Calu3 (cell line): ENCODE measurements at regions of chr7 and their contacts with region 1.

Region 1: GRCh38 chr7:116929914-116930913 is 23.1 kb upstream of the ST7 start:
- DNase-seq: peak; percentile 73
- H3K4me3 Mint-ChIP-seq: peak overlapping the region; percentile 1
- H3K27ac Mint-ChIP-seq: no peak overlapping the region
- H3K4me1 Mint-ChIP-seq: peaks cover 9% of the 10 kb centered on the region
- H3K27me3 Mint-ChIP-seq: no peaks in the 10 kb centered on the region
- CTCF ChIP-seq: peak; percentile 82

Region 2: DNA sequence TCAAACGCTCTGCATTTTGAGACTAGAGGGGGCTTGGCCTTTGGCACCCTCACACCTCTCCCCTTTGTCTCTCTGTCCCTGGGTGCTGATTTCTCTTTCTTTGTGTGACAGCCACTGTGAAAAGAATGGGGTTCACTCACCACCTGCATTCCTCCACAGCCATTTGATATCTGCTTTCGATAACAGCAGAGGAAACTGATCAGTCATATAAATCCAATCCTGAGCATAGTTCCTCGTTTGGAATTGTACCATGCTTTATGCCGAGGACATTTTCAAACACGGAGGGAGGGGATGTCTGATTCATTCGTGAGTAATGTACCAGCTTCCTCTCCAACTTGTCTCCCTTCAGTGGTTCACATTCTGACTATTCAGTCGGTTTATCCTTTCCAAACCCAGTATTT is 242.4 kb before region 1 on chr7:
- CTCF ChIA-PET with region 1: no interaction called
- intact Hi-C with region 1: no loop called
- DNase-seq: peak; percentile 45
- H3K4me3 Mint-ChIP-seq: peak overlapping the region; percentile 51
- H3K27ac Mint-ChIP-seq: peak overlapping the region; percentile 68
- H3K4me1 Mint-ChIP-seq: peaks cover 85% of the 10 kb centered on the region
- H3K27me3 Mint-ChIP-seq: no peaks in the 10 kb centered on the region
- CTCF ChIP-seq: no peak

Region 3: DNA sequence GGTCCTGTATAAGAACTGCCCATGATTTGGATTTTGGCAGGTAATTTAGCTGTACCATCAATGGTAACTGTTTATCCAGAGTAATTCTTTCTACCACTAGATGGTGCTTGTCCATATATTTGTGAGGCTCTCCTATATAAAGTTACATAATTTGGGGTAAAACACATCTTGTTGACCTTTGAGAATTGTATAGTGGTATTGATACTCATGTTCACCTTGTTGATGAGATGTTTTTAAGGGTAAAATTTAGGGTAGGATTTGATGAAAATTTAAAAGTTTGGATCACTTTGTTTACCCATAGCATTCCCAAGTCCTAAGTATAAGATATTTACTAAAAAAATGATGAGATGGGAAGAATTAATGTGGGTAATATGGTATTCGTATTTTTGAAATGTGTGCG is 54.7 kb after region 1 on chr7:
- CTCF ChIA-PET with region 1: interaction called, 6 read pairs
- intact Hi-C with region 1: loop called (anchors 2 kb)
- DNase-seq: no peak
- H3K4me3 Mint-ChIP-seq: no peak overlapping the region
- H3K27ac Mint-ChIP-seq: no peak overlapping the region
- H3K4me1 Mint-ChIP-seq: peaks cover 6% of the 10 kb centered on the region
- H3K27me3 Mint-ChIP-seq: no peaks in the 10 kb centered on the region
- CTCF ChIP-seq: peak; percentile 45

Region 4: DNA sequence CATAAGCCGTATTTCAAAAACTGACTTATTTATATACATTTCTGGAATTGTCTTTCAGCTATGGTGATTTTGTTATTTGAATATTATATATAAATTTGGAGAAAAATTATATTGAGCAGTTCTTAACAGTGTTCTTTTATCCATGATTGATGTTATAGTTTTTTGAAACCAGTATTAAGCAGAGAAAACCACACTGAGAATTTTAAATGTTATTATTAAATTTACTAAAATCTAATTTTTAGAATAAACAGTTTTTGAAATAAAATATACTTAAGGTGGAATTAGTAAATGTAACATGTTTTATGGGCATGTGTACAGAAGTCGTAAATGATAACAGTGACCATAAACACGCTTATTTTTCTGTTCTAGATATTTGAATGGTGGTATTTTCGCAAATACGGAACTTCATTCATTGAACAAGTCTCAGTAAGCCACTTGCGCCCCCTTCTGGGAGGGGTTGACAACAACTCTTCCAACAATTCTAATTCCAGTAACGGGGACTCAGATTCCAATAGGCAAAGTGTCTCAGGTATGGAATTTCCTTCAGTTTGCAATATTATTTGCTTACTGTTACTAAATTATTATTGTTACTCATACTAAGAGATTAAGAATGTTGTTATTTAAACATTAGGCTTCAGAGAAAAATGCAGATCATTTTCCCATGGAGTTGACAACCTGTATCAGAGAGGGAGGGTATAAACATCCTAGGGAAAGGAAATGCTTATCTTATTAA is 189.1 kb after region 1 on chr7:
- CTCF ChIA-PET with region 1: interaction called, 5 read pairs
- intact Hi-C with region 1: loop called (anchors 2 kb)
- DNase-seq: peak; percentile 85
- H3K4me3 Mint-ChIP-seq: no peak overlapping the region
- H3K27ac Mint-ChIP-seq: no peak overlapping the region
- H3K4me1 Mint-ChIP-seq: no peaks in the 10 kb centered on the region
- H3K27me3 Mint-ChIP-seq: no peaks in the 10 kb centered on the region
- CTCF ChIP-seq: peak; percentile 70

Region 5: GRCh38 chr7:117127585-117128168 is 197.5 kb after region 1 on chr7:
- CTCF ChIA-PET with region 1: interaction called, 5 read pairs
- intact Hi-C with region 1: loop called (anchors 1 kb)
- DNase-seq: peak; percentile 47
- H3K4me3 Mint-ChIP-seq: no peak overlapping the region
- H3K27ac Mint-ChIP-seq: no peak overlapping the region
- H3K4me1 Mint-ChIP-seq: no peaks in the 10 kb centered on the region
- H3K27me3 Mint-ChIP-seq: no peaks in the 10 kb centered on the region
- CTCF ChIP-seq: peak; percentile 49